Gastrocnemius medialis (tissue), 4 donors: ENCODE measurements at regions of chr11 and their contacts with region 1.

Region 1: GRCh38 chr11:107705027-107705426 is 6.8 kb downstream of the SLN start:
- DNase-seq: peak; percentile 74 to 82
- ATAC-seq: peak; percentile 83 to 90
- H3K4me3 ChIP-seq: no peak overlapping the region
- H3K27ac ChIP-seq: peak overlapping the region; percentile 83 to 93 (median 86)
- H3K4me1 ChIP-seq: peaks cover 51 to 60% of the 10 kb centered on the region in 2 donors
- H3K27me3 ChIP-seq: no peaks in the 10 kb centered on the region
- CTCF ChIP-seq: no peak
- POLR2A ChIP-seq: peak in 1 of 2 donors; percentile 17

Region 2: DNA sequence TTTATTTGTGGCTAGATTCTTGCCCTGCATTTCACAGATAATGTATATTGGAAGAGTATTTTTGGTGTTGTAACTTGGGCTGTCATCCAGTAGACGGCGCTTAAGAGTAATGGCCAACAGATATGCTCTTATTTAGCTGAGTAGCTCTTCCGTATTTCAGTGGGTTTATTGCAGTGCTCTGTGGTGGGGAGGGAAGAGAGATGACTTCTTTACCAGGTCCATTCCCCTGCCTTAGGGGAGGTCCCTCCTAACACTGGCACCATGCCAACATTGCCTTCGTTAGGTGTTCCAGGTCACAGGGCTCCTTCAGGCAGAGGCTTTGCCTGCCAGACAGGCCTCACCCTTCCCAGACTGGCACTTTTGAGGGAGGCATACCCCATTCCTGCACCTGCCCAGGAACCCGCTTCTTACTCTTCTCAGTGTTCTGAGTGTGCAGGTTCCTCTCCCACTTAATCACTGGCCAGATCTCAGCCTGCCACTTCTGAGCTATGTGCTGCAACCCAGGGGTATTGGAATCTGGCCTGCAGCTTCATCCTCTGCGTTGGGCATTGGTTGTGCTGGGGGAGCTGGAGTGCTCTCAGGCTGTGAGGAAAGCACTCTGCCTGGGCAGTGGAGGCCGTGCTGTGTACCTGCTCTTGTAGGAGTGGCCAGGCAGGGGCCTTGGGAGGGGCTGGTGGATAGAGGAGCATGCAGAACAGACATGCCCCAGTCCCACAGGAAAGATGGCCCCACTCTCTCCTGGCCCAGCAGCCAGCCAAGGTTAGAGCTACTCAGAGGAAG is 36.2 kb after region 1 on chr11:
- in situ Hi-C with region 1: no loop called
- intact Hi-C with region 1: loop called (anchors 5 kb)
- DNase-seq: no peak
- ATAC-seq: no peak
- H3K4me3 ChIP-seq: no peak overlapping the region
- H3K27ac ChIP-seq: peak overlapping the region in 3 of 4 donors; percentile 1 to 88 (median 85)
- H3K4me1 ChIP-seq: peaks cover 25 to 27% of the 10 kb centered on the region in 2 donors
- H3K27me3 ChIP-seq: no peaks in the 10 kb centered on the region
- CTCF ChIP-seq: peak in 1 of 5 experiments; percentile 25
- POLR2A ChIP-seq: no peak

Region 3: GRCh38 chr11:108037636-108038035 is 332.6 kb after region 1 on chr11:
- in situ Hi-C with region 1: no loop called
- intact Hi-C with region 1: loop called (anchors 10 kb)
- DNase-seq: no peak
- ATAC-seq: no peak
- H3K4me3 ChIP-seq: no peak overlapping the region
- H3K27ac ChIP-seq: peak overlapping the region; percentile 67 to 81 (median 72)
- H3K4me1 ChIP-seq: peaks cover 41 to 43% of the 10 kb centered on the region in 2 donors
- H3K27me3 ChIP-seq: no peaks in the 10 kb centered on the region
- CTCF ChIP-seq: no peak
- POLR2A ChIP-seq: no peak

Region 4: DNA sequence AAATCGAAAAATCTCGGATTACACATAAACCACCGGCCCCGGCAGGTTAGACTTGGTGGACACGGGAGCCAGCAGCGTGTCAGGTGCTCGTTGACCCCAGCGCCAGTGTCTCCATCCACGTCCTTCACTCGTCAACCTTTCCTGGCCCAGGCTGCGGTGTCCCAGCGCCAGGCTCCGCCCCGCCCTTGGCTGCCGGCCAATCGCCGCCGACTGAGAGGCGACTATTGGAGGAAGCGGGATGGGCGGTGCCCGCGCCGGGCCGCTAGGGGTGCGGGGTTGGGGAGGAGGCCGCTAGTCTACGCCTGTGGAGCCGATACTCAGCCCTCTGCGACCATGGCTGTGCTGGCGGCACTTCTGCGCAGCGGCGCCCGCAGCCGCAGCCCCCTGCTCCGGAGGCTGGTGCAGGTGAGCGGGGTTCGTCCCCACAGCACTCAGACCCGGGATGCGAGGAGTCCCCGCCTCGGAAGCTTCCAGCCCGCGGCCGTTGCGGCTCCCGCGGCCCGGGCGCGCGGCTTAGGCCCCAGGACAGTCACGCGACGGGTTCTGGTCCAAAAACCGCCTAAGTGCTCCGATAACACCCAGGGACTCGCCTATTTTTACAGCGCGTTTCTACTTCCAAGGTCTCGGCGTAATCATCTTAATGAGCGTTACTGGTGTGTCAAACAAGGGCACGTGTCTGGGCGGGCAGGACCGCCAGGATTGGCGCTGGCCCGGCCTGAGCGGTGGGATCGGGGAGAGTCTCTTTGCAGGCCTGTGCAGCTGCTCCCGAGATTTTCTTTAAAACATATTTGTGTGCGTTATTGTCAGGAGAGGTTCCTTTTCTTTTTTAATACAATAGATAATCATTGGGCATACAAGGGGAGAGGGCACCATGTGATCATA is 416.5 kb after region 1 on chr11 and contains the start of gene ACAT1:
- in situ Hi-C with region 1: loop called in 1 of 4 experiments (anchors 10 kb)
- intact Hi-C with region 1: loop called (anchors 5 kb)
- DNase-seq: peak; percentile 96 to 99
- ATAC-seq: peak; percentile 72 to 82
- H3K4me3 ChIP-seq: peak within 1 kb of the TSS; percentile 63 to 84 (median 76)
- H3K27ac ChIP-seq: peak within 1 kb of the TSS; percentile 89 to 99 (median 93)
- H3K4me1 ChIP-seq: peaks cover 34 to 42% of the 10 kb centered on the region in 2 donors
- H3K27me3 ChIP-seq: no peaks in the 10 kb centered on the region
- CTCF ChIP-seq: peak; percentile 39 to 84 (median 60)
- POLR2A ChIP-seq: peak; percentile 98
- total RNA-seq, gene ACAT1: 288 to 950 (median 605) TPM